ENCODE measurements at regions of chr14 and their contacts with region 1.

Region 1: GRCh38 chr14:61662437-61663311 is 32.6 kb upstream of the HIF1A start:
- DNase-seq: peak; percentile 73
- ATAC-seq: peak; percentile 84
- H3K4me3 Mint-ChIP-seq: peak overlapping the region; percentile 46
- H3K27ac Mint-ChIP-seq: peak overlapping the region; percentile 91
- H3K4me1 Mint-ChIP-seq: peaks cover 67% of the 10 kb centered on the region
- H3K27me3 Mint-ChIP-seq: no peaks in the 10 kb centered on the region

Region 2: DNA sequence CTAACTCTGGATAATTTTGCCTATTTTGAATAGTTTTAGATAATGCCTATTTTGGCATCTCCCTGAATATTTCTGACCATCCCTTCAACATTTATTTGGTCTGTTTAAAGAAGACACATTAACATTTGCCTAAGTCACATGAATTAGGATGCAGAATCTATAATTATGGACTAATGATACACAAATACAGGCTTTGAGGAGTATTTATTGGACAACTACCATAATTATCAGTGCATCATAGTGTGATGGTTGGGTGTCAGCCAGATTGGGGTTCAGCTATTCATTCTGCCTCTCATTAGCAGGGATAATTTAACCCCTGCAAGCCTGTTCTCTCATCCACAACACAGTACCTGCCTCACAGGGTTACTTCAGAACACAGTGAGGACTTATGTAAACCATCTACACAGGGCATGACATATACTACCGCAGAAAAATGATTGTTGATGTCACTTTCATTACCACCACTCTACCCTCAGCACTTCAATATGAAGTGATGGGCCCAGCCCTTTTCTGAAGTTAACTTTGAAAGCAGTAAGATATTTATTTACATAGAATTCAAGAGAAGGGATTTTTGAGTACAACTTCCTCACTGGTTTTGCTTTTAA is 326.9 kb before region 1 on chr14:
- CTCF ChIA-PET with region 1: no interaction called
- POLR2A ChIA-PET with region 1: no interaction called
- intact Hi-C with region 1: loop called in 1 of 2 experiments (anchors 2 kb)
- DNase-seq: no peak
- ATAC-seq: peak; percentile 67
- H3K4me3 Mint-ChIP-seq: peak overlapping the region; percentile 48
- H3K27ac Mint-ChIP-seq: peak overlapping the region; percentile 90
- H3K4me1 Mint-ChIP-seq: peaks cover 85% of the 10 kb centered on the region
- H3K27me3 Mint-ChIP-seq: no peaks in the 10 kb centered on the region

Region 3: GRCh38 chr14:61503167-61503801 is 159.4 kb before region 1 on chr14:
- CTCF ChIA-PET with region 1: interaction called, 3 read pairs
- POLR2A ChIA-PET with region 1: interaction called, 9 read pairs
- intact Hi-C with region 1: loop called (anchors 1 kb)
- DNase-seq: peak; percentile 90
- ATAC-seq: peak; percentile 80
- H3K4me3 Mint-ChIP-seq: peak overlapping the region; percentile 56
- H3K27ac Mint-ChIP-seq: peak overlapping the region; percentile 99
- H3K4me1 Mint-ChIP-seq: peaks cover 98% of the 10 kb centered on the region
- H3K27me3 Mint-ChIP-seq: no peaks in the 10 kb centered on the region

Region 4: DNA sequence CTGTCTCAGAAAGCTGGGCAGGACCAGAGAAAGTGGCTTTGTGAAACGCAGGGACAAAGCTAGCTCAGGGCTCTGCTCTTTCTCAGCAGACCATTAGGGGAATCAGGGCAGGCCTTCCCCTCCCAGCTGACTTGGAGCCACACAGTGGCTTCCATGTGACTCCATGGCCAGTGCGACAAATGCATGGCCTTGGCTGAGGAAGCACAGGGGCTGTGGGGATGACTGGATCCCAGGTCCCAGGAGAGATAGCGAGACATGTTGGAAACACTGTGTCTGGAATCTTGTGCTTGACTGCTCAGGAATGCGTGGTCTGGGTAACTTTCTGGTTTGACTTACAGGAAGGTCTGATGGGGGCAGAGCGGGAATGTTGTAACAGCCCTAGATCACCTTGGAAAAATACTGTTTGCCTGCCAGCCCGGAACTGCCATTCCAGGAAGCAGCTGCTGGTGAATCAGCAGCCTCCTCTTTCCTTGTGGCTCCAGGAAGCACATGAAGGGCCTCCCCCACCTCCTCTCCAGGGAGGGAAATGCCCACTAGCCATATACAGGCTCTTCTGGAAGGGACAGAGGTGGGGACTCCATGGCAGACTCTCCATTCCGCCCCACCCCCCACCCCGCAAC is 100.9 kb before region 1 on chr14:
- CTCF ChIA-PET with region 1: interaction called, 5 read pairs
- POLR2A ChIA-PET with region 1: interaction called, 6 read pairs
- intact Hi-C with region 1: loop called in 1 of 2 experiments (anchors 1 kb)
- DNase-seq: no peak
- ATAC-seq: no peak
- H3K4me3 Mint-ChIP-seq: no peak overlapping the region
- H3K27ac Mint-ChIP-seq: peak overlapping the region; percentile 81
- H3K4me1 Mint-ChIP-seq: peaks cover 62% of the 10 kb centered on the region
- H3K27me3 Mint-ChIP-seq: no peaks in the 10 kb centered on the region

Region 5: DNA sequence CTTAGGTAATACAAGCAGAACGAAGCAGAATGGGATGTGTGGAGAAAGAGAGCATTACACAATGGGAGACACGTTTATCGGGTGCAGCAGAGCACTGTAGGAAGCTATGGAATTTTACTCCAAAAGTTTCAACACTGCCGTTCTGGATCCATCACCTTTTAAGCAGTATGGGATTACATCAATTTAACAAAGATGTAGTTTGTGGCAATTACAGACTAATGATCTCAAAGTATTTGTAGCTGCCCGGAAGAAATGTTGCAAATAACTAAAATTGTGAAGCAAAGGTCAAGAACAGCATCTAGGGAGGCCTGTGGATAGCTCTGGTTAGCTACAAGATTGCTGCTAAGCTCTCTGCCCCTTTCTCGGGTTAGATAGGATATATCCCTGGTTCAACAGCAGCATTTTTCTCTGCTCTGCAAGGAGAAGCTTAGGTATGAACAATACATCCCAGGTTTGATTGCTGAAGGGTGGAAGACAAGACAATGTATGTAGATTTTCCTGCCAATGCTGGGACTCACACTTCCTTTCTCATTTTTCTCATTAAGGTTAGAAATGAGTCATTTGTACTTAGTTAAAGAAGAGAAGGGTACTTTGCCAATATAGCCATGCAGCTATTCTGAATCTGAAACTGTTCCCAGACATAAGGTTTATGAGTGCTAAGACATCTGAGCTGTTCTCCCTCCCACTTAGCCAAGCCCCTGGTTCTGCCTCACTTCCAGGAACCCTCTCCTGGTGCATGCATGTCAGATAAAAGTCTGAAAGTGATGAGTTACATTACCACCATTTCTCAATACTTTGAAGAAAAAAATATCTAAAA is 42.3 kb before region 1 on chr14:
- CTCF ChIA-PET with region 1: interaction called, 4 read pairs
- POLR2A ChIA-PET with region 1: interaction called, 3 read pairs
- intact Hi-C with region 1: loop called (anchors 1 kb)
- DNase-seq: peak; percentile 82
- ATAC-seq: peak; percentile 91
- H3K4me3 Mint-ChIP-seq: no peak overlapping the region
- H3K27ac Mint-ChIP-seq: peak overlapping the region; percentile 81
- H3K4me1 Mint-ChIP-seq: peaks cover 79% of the 10 kb centered on the region
- H3K27me3 Mint-ChIP-seq: no peaks in the 10 kb centered on the region

Region 6: DNA sequence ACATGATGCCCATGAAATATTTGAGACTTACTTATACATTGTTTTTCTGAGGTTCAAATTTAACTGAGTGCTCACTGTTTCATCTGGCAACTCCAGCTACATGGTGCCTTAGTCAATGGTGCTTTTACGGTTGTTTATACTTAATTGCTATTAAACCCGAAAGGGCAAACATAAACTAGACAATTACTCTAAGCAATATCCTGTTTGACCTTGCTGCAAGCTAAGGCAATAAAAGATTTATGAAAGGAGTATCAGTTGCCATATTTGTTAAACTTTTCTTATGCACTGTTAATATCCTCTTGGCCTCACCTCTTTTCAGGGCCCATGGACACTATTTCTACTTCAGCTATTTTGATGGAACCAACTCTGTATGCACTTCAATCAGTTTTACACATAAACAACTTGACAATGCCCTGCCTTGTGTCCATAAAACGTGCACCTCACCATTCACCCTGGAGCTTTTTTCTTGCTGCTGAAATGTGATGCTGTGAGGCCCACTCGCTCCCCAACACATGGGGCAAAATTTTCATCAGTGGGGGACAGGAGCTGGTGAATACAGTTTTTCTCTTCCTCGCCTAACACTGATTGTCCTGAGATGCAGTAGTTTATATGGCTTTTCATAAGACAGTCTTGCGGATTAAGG is 31.5 kb before region 1 on chr14:
- CTCF ChIA-PET with region 1: no interaction called
- POLR2A ChIA-PET with region 1: no interaction called
- intact Hi-C with region 1: no loop called
- DNase-seq: no peak
- ATAC-seq: no peak
- H3K4me3 Mint-ChIP-seq: no peak overlapping the region
- H3K27ac Mint-ChIP-seq: no peak overlapping the region
- H3K4me1 Mint-ChIP-seq: peaks cover 21% of the 10 kb centered on the region
- H3K27me3 Mint-ChIP-seq: no peaks in the 10 kb centered on the region

Region 7: GRCh38 chr14:61737915-61738314 is 75.2 kb after region 1 on chr14:
- CTCF ChIA-PET with region 1: no interaction called
- POLR2A ChIA-PET with region 1: no interaction called
- intact Hi-C with region 1: no loop called
- DNase-seq: no peak
- ATAC-seq: no peak
- H3K4me3 Mint-ChIP-seq: no peak overlapping the region
- H3K27ac Mint-ChIP-seq: peak overlapping the region; percentile 34
- H3K4me1 Mint-ChIP-seq: peaks cover 12% of the 10 kb centered on the region
- H3K27me3 Mint-ChIP-seq: no peaks in the 10 kb centered on the region